ENCODE measurements at regions of chr11 and their contacts with region 1.

Region 1: GRCh38 chr11:26649884-26650283 is 72.0 kb downstream of the SLC5A12 start:
- DNase-seq: peak in 3 of 10 donors; percentile 15 to 65 (median 41)
- H3K4me3 ChIP-seq: no peak overlapping the region
- H3K27ac ChIP-seq: no peak overlapping the region
- H3K27me3 ChIP-seq: peaks cover 0 to 3% (median 0%) of the 10 kb centered on the region in 45 donors
- CTCF ChIP-seq: peak; percentile 36 to 73 (median 60)

Region 2: DNA sequence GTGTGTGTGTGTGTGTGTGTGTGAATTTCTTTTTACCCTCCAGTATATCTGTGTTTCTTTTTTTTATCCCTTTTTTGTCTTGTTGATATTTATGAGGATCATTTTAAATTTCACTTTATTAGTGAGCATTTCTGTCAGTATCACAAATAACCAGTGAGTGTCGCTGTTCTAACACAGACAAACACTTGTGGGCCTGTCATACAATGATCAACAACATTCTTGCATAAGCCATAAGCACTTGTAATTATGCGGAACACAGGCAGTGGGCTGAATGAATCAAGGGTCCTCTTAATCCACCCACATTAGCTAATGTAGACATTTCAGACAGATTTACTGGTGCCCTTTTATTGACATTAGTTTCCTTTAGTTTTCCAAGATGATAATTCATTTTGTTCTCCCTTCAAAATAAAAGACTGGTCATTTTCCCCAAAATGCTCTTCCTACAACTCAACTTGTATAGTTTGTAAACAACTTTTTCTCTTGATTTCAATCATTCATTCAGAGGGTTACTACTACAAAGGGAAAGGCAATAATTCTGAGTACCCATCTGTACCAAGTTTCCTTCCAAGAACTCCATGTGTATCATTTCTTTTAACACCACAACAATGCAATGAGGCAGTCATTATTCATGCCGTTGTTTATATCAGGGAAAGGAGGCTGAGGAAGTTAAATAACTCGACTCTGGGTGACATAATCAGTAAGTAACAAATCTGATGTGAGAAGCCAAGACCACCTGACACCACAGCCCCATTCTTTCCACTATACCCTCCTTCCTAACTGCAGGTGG is 352.5 kb before region 1 on chr11:
- intact Hi-C with region 1: loop called in 1 of 2 experiments (anchors 2 kb)
- DNase-seq: no peak
- H3K4me3 ChIP-seq: no peak overlapping the region
- H3K27ac ChIP-seq: no peak overlapping the region
- H3K27me3 ChIP-seq: no peaks in the 10 kb centered on the region
- CTCF ChIP-seq: peak; percentile 43 to 81 (median 70)

Region 3: DNA sequence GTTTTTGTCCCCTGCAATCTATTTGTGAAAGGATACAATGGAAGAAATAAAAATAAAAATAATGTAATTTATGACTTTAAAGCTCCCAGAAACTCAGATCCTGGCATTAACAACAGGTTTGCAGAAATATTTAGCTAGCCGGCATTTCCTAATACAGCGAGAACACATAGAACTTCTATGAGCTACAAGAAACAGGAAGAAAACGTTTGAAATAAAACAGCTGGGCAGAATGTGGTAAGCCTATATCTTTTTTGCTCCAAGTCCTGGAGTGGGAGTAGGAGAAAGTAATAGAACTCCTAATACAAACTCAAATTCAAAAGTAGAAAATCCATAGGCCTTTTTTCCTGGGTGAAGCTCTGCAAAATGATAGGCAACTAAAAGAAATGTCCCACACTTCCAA is 314.5 kb after region 1 on chr11:
- intact Hi-C with region 1: no loop called
- DNase-seq: no peak
- H3K4me3 ChIP-seq: no peak overlapping the region
- H3K27ac ChIP-seq: no peak overlapping the region
- H3K27me3 ChIP-seq: no peaks in the 10 kb centered on the region
- CTCF ChIP-seq: no peak

Measured in dorsolateral prefrontal cortex (tissue), 120 donors.